PC-3 (cell line): ENCODE measurements at regions of chr15 and their contacts with region 1.

Region 1: DNA sequence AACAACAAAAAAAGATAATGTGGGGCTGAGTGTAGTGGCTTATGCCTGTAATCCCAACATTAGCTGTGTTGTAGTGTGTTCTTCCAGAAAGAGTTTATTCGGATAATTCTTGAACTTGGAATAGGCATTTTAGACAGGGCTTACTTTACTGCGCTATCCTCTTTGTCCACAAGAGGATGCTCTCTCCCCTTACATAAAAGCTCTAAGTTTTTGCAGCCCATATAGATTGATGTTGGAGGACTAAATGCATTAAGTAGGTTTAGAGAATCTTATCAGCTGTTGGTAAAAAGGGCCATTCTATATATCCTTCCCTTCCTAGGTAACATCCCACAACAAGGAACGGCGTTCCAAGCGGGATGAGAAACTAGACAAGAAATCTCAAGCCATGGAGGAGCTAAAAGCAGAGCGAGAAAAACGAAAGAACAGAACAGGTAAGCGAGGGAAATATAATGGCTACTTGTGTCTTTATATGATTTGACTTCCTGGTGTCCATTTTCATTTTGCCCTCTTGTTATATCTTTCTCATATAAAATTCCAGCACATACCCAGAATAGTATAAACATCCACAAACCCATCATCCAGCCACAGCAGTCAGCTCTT is 27.8 kb upstream of the ITPKA start:
- DNase-seq: peak; percentile 73
- ATAC-seq: peak; percentile 80
- H3K4me3 ChIP-seq: no peak overlapping the region
- H3K27ac ChIP-seq: no peak overlapping the region
- H3K4me1 ChIP-seq: no peaks in the 10 kb centered on the region
- H3K27me3 ChIP-seq: no peaks in the 10 kb centered on the region
- CTCF ChIP-seq: peak; percentile 97

Region 2: GRCh38 chr15:41443275-41443674 is 22.6 kb before region 1 on chr15:
- CTCF ChIA-PET with region 1: interaction called, 13 read pairs
- POLR2A ChIA-PET with region 1: no interaction called
- intact Hi-C with region 1: no loop called
- DNase-seq: no peak
- ATAC-seq: no peak
- H3K4me3 ChIP-seq: no peak overlapping the region
- H3K27ac ChIP-seq: no peak overlapping the region
- H3K4me1 ChIP-seq: no peaks in the 10 kb centered on the region
- H3K27me3 ChIP-seq: no peaks in the 10 kb centered on the region
- CTCF ChIP-seq: no peak

Region 3: DNA sequence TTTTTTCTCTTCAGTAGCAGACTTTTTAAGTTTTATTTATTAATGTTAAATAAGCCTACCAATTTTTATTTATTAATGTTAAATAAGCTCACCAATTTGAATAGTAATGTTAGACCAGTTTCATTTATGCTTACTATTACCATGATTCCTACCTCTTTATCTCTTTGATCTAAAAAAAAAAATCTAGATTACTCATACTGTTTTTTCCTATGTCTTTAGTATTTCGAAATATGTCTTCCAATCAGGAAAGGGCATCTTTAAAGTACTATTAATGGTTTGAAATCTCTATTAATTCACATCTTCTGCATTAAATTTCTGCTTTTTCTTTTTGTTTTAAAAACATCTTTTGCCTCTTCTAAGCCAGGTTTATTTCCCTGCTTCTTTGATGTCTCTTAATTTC is 280.9 kb after region 1 on chr15:
- CTCF ChIA-PET with region 1: no interaction called
- POLR2A ChIA-PET with region 1: no interaction called
- intact Hi-C with region 1: loop called (anchors 10 kb)
- DNase-seq: peak; percentile 39
- ATAC-seq: no peak
- H3K4me3 ChIP-seq: no peak overlapping the region
- H3K27ac ChIP-seq: no peak overlapping the region
- H3K4me1 ChIP-seq: peaks cover 4% of the 10 kb centered on the region; the same call in 1 of the 2 replicates
- H3K27me3 ChIP-seq: no peaks in the 10 kb centered on the region
- CTCF ChIP-seq: no peak

Region 4: DNA sequence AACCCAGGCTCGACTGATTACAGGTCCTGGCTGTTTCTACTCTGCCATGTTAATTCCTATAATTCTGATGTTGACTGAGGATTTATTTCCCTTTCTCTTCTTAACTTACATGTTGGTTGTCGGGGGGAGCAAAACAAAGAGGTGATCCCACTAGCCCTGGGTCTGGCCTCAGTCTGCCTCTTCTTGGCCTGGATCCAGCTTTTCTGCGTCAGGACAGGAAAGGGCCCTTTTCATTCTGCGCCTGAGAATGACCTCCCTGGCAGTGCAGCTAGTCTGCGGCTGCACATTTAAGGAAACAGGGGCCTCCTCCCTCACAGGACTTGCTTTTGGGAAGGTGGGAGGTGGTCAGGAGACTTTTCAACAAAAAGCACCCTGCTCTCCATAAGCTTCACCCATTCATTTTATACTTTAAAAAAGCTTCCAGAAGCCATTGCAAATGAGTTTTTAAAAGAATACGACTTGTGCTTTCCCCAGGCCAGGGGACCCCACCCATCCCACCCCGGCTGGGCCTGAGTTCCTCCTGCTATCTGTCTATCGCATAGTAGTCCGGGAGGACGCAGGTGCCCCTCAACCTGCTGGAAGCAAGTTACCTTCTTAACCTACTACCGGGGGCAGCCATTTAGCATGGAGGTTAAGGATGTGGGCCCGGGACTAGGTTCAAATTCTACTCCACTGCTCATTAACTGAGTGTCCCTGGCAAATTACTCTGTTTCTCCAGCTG is 527.7 kb after region 1 on chr15:
- CTCF ChIA-PET with region 1: no interaction called
- POLR2A ChIA-PET with region 1: no interaction called
- intact Hi-C with region 1: no loop called
- DNase-seq: no peak
- ATAC-seq: no peak
- H3K4me3 ChIP-seq: no peak overlapping the region
- H3K27ac ChIP-seq: no peak overlapping the region
- H3K4me1 ChIP-seq: no peaks in the 10 kb centered on the region
- H3K27me3 ChIP-seq: no peaks in the 10 kb centered on the region
- CTCF ChIP-seq: no peak